Posterior vena cava (tissue), 2 donors: ENCODE measurements at regions of chr1 and their contacts with region 1.

Region 1: GRCh38 chr1:220330265-220330664 is 58.0 kb upstream of the RAB3GAP2 start:
- DNase-seq: no peak

Region 2: GRCh38 chr1:220301630-220302029 is 28.6 kb before region 1 on chr1:
- intact Hi-C with region 1: loop called in 1 of 2 experiments (anchors 1 kb)
- DNase-seq: no peak

Region 3: DNA sequence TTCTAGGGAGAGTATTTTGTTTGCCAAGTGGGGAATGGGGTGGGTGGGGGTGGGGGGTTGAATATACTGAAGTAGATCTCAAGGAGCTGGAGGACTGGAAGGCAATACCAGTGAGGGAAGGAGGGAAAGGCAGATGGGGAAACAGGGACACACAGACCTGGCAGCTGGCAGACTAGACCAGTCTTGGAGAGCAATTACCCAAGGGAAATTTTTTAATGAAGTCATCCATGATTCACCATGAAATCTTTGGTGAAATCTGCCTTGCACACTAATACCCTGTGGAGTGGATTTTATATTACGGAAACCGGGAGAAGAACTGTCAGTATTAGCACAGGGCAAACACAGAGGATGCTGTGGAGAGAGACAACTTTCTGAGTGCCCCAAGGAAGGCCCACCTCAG is 167.9 kb after region 1 on chr1:
- intact Hi-C with region 1: no loop called
- DNase-seq: no peak

Region 4: DNA sequence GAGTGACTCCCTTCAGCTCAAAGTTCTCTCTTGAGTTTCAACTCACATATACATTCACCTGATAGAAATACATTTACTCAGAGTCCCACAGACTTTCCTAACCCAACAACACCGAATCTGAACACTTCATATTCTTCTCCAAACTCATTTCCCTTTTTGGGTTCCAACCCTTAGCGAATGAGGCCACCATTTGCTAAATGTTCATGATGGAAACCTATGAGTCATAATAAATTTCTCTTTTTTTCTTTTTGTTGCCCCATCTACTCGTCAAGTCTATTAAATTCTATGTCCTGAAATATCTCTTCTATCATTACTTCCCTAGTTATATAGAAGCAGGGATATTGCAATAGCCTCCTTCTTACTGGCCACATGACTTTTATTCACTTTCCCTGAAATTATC is 649.1 kb after region 1 on chr1:
- intact Hi-C with region 1: loop called in 1 of 2 experiments (anchors 5 kb)
- DNase-seq: no peak